ENCODE measurements at regions of chr17 and their contacts with region 1.

Region 1: GRCh38 chr17:66661381-66661843 is 173.5 kb upstream of the CACNG5 start:
- DNase-seq: peak; percentile 95
- ATAC-seq: peak; percentile 87
- H3K4me3 ChIP-seq: peak overlapping the region in 1 of 2 experiments; percentile 2; a peak in 1 of 4 replicates
- H3K27ac ChIP-seq: peak overlapping the region; percentile 17
- H3K4me1 ChIP-seq: peaks cover 21 to 32% of the 10 kb centered on the region in 2 experiments
- H3K27me3 ChIP-seq: no peaks in the 10 kb centered on the region
- CTCF ChIP-seq: no peak
- POLR2A ChIP-seq: no peak
- RAD21 ChIP-seq: peak; percentile 36; the same call in 1 of the 2 replicates

Region 2: GRCh38 chr17:65561394-65562205 is 1099.8 kb before region 1 on chr17 and contains the start of gene AXIN2:
- CTCF ChIA-PET with region 1: no interaction called
- POLR2A ChIA-PET with region 1: no interaction called
- RAD21 ChIA-PET with region 1: no interaction called
- intact Hi-C with region 1: loop called (anchors 5 kb)
- DNase-seq: peak; percentile 90
- ATAC-seq: peak; percentile 65
- H3K4me3 ChIP-seq: peak within 1 kb of the TSS; percentile 68 to 74
- H3K27ac ChIP-seq: peak within 1 kb of the TSS; percentile 86
- H3K4me1 ChIP-seq: peaks cover 43 to 63% of the 10 kb centered on the region in 2 experiments
- H3K27me3 ChIP-seq: no peaks in the 10 kb centered on the region
- CTCF ChIP-seq: peak in 1 of 3 experiments; percentile 23; a peak in 1 of 6 replicates
- POLR2A ChIP-seq: no peak
- RAD21 ChIP-seq: no peak
- total RNA-seq, gene AXIN2: 7.1 TPM

Region 3: GRCh38 chr17:66807182-66807581 is 145.8 kb after region 1 on chr17:
- CTCF ChIA-PET with region 1: no interaction called
- POLR2A ChIA-PET with region 1: no interaction called
- RAD21 ChIA-PET with region 1: no interaction called
- intact Hi-C with region 1: no loop called
- DNase-seq: no peak
- ATAC-seq: no peak
- H3K4me3 ChIP-seq: no peak overlapping the region
- H3K27ac ChIP-seq: no peak overlapping the region
- H3K4me1 ChIP-seq: no peaks in the 10 kb centered on the region
- H3K27me3 ChIP-seq: no peaks in the 10 kb centered on the region
- CTCF ChIP-seq: no peak
- POLR2A ChIP-seq: no peak
- RAD21 ChIP-seq: no peak

Measured in HCT116 (cell line).